Activated CD8-positive, alpha-beta memory T cell treated with anti-CD3 and anti-CD28 coated beads, Interleukin-2, amount 10 ng/mL, durations not matched to agents 7 days and 5 days (primary cell): ENCODE measurements at regions of chr2 and their contacts with region 1.

Region 1: DNA sequence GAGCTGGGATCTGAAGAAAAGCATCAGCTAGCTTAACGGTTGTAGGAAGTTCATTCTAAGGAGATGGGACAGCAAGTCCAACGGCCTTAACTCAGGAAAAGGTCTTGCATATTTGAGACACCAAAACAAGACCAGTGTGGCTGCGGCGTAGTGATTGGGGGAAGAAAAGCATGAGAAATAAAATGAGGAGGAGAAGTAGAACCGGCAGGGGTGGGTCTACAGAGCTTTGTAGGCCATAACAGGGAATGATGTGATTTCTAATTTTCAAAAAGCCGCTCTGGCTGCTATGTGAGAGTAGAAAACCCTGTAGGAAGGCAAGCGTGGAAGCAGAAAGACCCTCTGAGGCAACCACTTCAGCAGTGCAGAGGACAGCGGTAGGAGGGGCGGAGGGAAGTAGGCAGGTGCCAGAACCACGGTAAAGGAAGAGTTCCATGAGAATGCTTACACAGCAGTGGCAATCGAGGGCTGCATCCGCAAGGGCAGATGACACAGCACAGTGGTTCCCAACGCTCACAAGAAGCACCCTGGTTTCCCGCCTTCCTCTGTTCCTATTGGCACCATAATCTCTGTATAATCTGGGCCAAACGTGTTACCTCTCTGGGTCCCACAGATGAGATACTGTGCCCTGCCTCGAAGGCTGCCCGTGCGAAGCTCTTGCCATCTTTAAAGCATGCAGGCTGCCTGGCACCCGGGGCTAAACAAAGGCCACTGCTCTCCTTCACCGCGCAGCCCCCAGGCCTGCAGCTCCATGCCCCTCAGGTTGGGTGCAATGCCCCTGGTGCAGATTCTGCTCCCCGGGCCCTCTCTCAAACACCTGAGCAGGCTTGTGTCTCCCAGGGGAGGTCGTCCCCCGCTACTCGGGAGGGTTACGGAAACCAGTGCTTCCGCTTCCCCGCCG is 791 bp downstream of the ANKRD39 start:
- DNase-seq: peak; percentile 64
- ATAC-seq: peak; percentile 20
- H3K4me3 Mint-ChIP-seq: peak overlapping the region; percentile 89
- H3K27ac Mint-ChIP-seq: peak overlapping the region; percentile 88
- H3K4me1 Mint-ChIP-seq: peaks cover 36% of the 10 kb centered on the region
- H3K27me3 Mint-ChIP-seq: no peaks in the 10 kb centered on the region

Region 2: GRCh38 chr2:96816128-96816835 is 40.7 kb before region 1 on chr2 and contains the start of gene CNNM3:
- CTCF ChIA-PET with region 1: interaction called, 33 read pairs
- DNase-seq: peak; percentile 96
- ATAC-seq: peak; percentile 94
- H3K4me3 Mint-ChIP-seq: peak within 1 kb of the TSS; percentile 84
- H3K27ac Mint-ChIP-seq: peak within 1 kb of the TSS; percentile 58
- H3K4me1 Mint-ChIP-seq: peaks cover 47% of the 10 kb centered on the region
- H3K27me3 Mint-ChIP-seq: no peaks in the 10 kb centered on the region
- total RNA-seq, gene CNNM3: 28.0 to 30.5 TPM

Region 3: DNA sequence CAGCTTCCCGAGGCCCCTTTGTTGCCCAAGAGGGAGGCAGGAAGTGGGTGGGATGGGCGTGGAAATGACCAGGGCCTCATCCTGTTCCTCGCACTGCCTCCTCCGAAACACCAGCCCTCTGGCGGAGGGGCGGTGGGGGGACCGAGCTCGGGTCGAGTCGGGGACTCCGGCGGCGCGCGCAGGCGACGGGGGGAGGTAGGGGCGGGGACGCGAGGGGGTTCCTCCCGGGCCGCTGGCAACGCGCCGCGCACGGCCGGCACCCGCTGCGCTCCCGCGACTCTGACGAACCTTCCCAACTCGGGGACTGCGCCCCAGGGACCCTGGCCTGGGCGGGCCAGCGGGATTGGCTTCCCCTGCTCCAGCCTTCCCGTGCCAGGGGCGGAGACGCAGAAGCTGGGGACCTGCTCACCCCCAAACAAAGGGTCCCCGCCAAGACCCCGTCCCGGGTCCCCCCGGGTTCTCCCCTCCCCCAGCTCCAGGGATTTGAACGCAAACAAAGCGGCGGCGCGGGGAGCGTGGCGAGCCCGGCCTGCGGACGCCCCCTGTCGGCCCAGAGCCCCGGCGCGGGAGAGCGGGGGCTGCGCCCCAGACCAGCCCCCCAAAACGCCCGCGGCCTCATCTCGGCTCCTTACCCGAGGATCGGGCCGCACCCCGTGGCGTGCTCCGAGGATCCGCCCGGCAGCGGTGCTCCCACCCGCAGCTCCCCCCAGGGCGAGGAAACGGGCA is 11.7 kb after region 1 on chr2:
- CTCF ChIA-PET with region 1: interaction called, 40 read pairs
- DNase-seq: peak; percentile 81
- ATAC-seq: peak; percentile 66
- H3K4me3 Mint-ChIP-seq: peak overlapping the region; percentile 69
- H3K27ac Mint-ChIP-seq: peak overlapping the region; percentile 74
- H3K4me1 Mint-ChIP-seq: peaks cover 32% of the 10 kb centered on the region
- H3K27me3 Mint-ChIP-seq: peaks cover 13% of the 10 kb centered on the region

Region 4: GRCh38 chr2:96940001-96940615 is 83.1 kb after region 1 on chr2:
- CTCF ChIA-PET with region 1: interaction called, 55 read pairs
- DNase-seq: no peak
- ATAC-seq: no peak
- H3K4me3 Mint-ChIP-seq: no peak overlapping the region
- H3K27ac Mint-ChIP-seq: no peak overlapping the region
- H3K4me1 Mint-ChIP-seq: peaks cover 19% of the 10 kb centered on the region
- H3K27me3 Mint-ChIP-seq: peaks cover 19% of the 10 kb centered on the region

Region 5: GRCh38 chr2:96951093-96951654 is 94.1 kb after region 1 on chr2:
- CTCF ChIA-PET with region 1: interaction called, 178 read pairs
- DNase-seq: peak; percentile 81
- ATAC-seq: peak; percentile 87
- H3K4me3 Mint-ChIP-seq: no peak overlapping the region
- H3K27ac Mint-ChIP-seq: no peak overlapping the region
- H3K4me1 Mint-ChIP-seq: peaks cover 26% of the 10 kb centered on the region
- H3K27me3 Mint-ChIP-seq: peaks cover 13% of the 10 kb centered on the region